Cardiac septum (tissue), 1 donor: ENCODE measurements at regions of chr11 and their contacts with region 1.

Region 1: DNA sequence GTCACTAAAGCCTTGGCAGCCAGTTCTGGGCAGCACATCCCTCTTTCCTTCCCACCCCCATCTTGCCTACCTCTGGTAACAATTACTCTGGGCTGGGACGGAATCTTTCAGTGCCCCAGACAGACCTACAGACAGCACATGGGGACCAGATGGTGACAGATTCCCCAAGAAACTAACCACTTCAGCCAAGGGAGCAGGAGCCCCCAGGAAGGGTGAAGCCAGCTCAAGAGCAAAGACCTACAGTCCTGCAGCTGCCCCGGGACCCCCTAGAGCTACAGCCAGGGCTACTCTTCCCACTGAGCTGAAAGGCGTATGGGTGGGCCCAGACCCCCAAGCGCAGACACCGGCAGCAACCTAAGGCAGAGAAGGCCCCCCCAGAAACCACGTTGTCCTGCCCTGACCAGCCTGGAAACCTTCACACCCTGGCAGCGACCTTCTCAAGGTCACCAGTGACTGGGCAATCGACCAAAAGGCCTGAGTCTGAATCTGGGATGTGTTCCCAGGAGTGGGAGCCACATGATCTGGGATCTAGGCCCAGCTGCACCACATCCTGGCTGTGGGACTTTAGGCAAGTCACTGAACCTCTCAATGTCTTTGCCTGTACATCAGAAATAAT is 65.8 kb downstream of the LRRC32 start:
- DNase-seq: peak; percentile 85

Region 2: DNA sequence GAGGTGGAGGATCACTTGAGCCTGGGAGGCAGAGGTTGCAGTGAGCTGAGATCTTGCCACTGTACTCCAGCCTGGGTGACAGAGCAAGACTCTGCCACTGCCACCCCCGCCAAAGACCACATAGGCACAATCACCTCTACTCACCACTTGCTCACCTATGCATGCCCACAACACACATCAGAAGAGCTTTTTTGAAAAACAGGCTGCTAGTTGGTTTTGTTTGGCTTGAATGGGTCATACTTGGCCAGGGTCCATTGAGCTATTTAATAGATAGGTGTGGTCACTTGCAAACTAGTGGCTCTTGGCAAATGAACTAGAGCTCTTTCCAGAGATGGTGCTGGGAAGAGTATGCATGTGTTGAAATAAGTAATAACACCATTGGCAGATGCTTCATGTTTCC is 79.8 kb before region 1 on chr11:
- intact Hi-C with region 1: no loop called
- DNase-seq: no peak

Region 3: DNA sequence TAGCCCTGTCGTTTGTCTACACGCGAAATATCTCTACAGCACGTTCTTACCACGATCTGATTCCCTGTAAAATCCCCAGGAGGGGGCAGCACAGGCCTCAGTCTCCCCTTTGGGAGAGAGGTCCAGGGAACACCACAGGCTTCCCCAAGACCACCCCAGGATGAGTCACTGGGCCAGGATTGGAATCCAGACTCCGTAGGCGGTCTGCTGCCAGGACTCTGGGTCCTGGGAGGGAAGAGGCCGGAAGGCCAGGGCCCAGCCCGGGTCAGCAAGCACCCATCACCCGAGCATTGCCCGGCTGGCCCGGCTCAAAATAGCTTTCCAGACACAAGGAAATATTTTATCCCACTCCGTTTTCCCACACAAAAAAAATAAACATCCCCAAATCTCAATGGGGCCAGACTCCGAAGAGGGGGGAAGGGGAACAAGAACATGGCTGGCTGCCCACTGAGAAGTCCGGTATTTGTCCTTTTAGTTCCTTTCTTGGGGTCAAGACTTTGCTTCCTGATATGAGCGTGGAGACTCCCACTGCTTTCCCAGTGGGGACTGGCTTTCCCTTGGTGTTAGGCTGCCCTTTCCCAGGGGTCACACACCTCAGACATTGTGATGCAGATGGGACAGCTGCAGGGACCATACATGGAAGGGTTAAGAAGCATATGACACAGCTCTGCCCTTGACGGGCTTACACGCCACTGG is 25.5 kb before region 1 on chr11:
- intact Hi-C with region 1: loop called (anchors 2 kb)
- DNase-seq: peak; percentile 85

Region 4: GRCh38 chr11:76654298-76654851 is 49.6 kb after region 1 on chr11:
- intact Hi-C with region 1: loop called (anchors 5 kb)
- DNase-seq: peak; percentile 76